ENCODE measurements at regions of chr1 and their contacts with region 1.

Region 1: GRCh38 chr1:169546087-169546995 is 39.9 kb downstream of the F5 start:
- DNase-seq: peak; percentile 81
- ATAC-seq: peak; percentile 82
- H3K4me3 ChIP-seq: no peak overlapping the region
- H3K4me3 Mint-ChIP-seq: no peak overlapping the region
- H3K27ac ChIP-seq: no peak overlapping the region
- H3K27ac Mint-ChIP-seq: no peak overlapping the region
- H3K4me1 ChIP-seq: no peaks in the 10 kb centered on the region
- H3K4me1 Mint-ChIP-seq: no peaks in the 10 kb centered on the region
- H3K27me3 ChIP-seq: no peaks in the 10 kb centered on the region
- H3K27me3 Mint-ChIP-seq: peaks cover 13% of the 10 kb centered on the region
- CTCF ChIP-seq: peak; percentile 78

Region 2: GRCh38 chr1:168603501-168604110 is 942.7 kb before region 1 on chr1:
- CTCF ChIA-PET with region 1: interaction called, 12 read pairs
- POLR2A ChIA-PET with region 1: no interaction called
- intact Hi-C with region 1: no loop called
- DNase-seq: peak; percentile 55
- ATAC-seq: peak; percentile 39
- H3K4me3 ChIP-seq: no peak overlapping the region
- H3K4me3 Mint-ChIP-seq: no peak overlapping the region
- H3K27ac ChIP-seq: no peak overlapping the region
- H3K27ac Mint-ChIP-seq: no peak overlapping the region
- H3K4me1 ChIP-seq: no peaks in the 10 kb centered on the region
- H3K4me1 Mint-ChIP-seq: no peaks in the 10 kb centered on the region
- H3K27me3 ChIP-seq: no peaks in the 10 kb centered on the region
- H3K27me3 Mint-ChIP-seq: peaks cover 28% of the 10 kb centered on the region
- CTCF ChIP-seq: peak; percentile 68

Region 3: DNA sequence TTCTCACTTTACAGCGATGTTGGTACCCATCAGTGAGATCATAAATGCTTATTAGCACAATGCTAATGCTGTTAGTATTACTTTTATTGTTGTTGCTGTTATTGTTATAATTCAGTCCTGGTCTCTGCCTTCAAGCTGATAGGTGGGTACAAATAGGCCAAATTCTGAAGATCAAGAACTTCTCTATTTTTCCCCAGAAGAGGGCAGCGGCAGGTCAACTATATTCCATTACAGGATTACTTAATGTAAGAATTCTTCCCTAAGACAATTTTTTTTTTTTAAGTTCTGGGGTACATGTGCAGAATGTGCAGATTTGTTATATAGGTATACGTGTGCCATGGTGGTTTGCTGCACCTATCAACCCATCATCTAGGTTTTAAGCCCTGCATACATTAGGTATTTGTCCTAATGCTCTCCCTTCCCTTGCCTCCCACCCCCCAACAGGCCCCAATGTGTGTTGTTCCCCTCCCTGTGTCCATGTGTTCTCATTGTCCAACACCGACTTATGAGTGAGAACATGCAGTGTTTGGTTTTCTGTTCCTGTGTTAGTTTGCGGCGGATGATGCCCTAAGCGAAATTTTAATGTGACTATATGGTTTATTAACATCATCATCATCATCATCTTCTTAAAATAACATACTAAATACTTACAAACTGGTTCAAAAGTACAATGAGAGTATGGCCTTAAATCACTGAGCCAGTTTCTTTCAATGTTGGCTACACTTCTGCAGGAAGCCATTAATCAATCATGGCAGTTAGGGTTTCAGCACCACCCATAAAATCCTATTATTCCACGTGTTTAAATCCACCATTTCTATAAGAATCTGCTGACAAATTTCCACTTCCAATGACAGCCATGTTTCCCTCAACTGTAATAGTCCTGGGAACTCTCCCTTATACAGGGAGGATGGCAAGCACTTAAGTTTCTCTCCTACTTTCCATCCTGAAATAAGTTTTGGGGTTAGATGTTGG is 79.8 kb before region 1 on chr1:
- CTCF ChIA-PET with region 1: interaction called, 22 read pairs
- POLR2A ChIA-PET with region 1: no interaction called
- intact Hi-C with region 1: loop called (anchors 1 kb)
- DNase-seq: peak; percentile 46
- ATAC-seq: no peak
- H3K4me3 ChIP-seq: no peak overlapping the region
- H3K4me3 Mint-ChIP-seq: no peak overlapping the region
- H3K27ac ChIP-seq: no peak overlapping the region
- H3K27ac Mint-ChIP-seq: no peak overlapping the region
- H3K4me1 ChIP-seq: no peaks in the 10 kb centered on the region
- H3K4me1 Mint-ChIP-seq: no peaks in the 10 kb centered on the region
- H3K27me3 ChIP-seq: no peaks in the 10 kb centered on the region
- H3K27me3 Mint-ChIP-seq: no peaks in the 10 kb centered on the region
- CTCF ChIP-seq: peak; percentile 22

Region 4: DNA sequence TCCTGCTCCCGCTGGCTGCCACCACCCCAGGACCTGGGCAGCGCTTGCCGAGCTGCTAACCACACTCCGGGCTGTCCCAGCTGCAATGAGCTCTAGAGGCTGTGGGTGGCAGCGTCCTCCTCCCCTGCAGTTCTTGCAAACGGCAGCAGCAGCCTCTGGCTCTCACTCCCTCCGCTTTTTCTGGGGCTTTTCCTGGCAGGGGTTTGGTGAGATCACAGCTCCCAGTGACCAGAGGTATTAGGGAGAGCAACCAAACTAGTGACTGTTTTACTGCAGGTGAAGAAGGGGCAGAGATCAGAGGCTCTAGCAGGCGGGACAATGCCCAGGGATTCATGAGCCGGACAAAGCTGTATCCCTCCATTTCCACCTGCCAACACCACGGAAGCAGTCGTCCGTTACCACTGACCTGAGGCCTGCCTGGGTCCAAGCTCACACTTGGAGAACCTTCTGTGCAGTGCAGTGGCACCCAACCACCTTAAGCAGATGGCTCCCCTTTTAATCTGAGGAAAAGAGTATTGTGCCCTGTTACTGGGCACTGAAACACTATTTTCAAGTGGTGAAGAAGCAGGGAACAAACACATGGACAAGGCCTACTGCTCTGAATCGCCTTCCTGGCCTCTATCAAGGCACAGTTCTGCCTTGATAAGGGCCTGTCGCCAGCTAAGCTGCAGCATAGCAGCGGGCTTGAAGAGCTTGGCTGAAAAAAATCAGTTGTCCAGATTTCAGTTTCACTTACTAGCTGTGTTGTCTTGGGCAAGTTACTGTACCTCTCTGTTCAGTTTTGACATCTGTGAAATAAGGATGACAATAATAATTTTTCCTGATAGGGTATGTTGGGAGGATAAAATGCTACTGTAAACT is 40.3 kb after region 1 on chr1 and contains the start of gene F5:
- CTCF ChIA-PET with region 1: interaction called, 11 read pairs
- POLR2A ChIA-PET with region 1: no interaction called
- intact Hi-C with region 1: no loop called
- DNase-seq: peak; percentile 75
- ATAC-seq: peak; percentile 93
- H3K4me3 ChIP-seq: peak within 1 kb of the TSS in 3 of 5 experiments; percentile 8 to 22 (median 13)
- H3K4me3 Mint-ChIP-seq: peak within 1 kb of the TSS; percentile 69
- H3K27ac ChIP-seq: no peak within 1 kb of the TSS
- H3K27ac Mint-ChIP-seq: no peak within 1 kb of the TSS
- H3K4me1 ChIP-seq: peaks cover 7 to 9% of the 10 kb centered on the region in 2 donors
- H3K4me1 Mint-ChIP-seq: peaks cover 7% of the 10 kb centered on the region
- H3K27me3 ChIP-seq: peaks cover 0 to 13% (median 9%) of the 10 kb centered on the region in 4 experiments
- H3K27me3 Mint-ChIP-seq: peaks cover 26% of the 10 kb centered on the region
- CTCF ChIP-seq: peak; percentile 73
- total RNA-seq, gene F5: 0.15 and 0.27 TPM in 2 replicates

Region 5: GRCh38 chr1:169809370-169810095 is 263.2 kb after region 1 on chr1:
- CTCF ChIA-PET with region 1: interaction called, 151 read pairs
- POLR2A ChIA-PET with region 1: no interaction called
- intact Hi-C with region 1: loop called (anchors 1 kb)
- DNase-seq: peak; percentile 62
- ATAC-seq: no peak
- H3K4me3 ChIP-seq: no peak overlapping the region
- H3K4me3 Mint-ChIP-seq: no peak overlapping the region
- H3K27ac ChIP-seq: no peak overlapping the region
- H3K27ac Mint-ChIP-seq: no peak overlapping the region
- H3K4me1 ChIP-seq: no peaks in the 10 kb centered on the region
- H3K4me1 Mint-ChIP-seq: no peaks in the 10 kb centered on the region
- H3K27me3 ChIP-seq: no peaks in the 10 kb centered on the region
- H3K27me3 Mint-ChIP-seq: no peaks in the 10 kb centered on the region
- CTCF ChIP-seq: peak; percentile 81